Activated B cell treated with CpG ODN at 0.5 μM for 24 hours (primary cell): ENCODE measurements at regions of chr3 and their contacts with region 1.

Region 1: GRCh38 chr3:39361252-39361927 is 21.8 kb upstream of the SLC25A38 start:
- DNase-seq: no peak
- ATAC-seq: no peak
- H3K4me3 Mint-ChIP-seq: no peak overlapping the region
- H3K27ac Mint-ChIP-seq: no peak overlapping the region
- H3K4me1 Mint-ChIP-seq: peaks cover 1% of the 10 kb centered on the region
- H3K27me3 Mint-ChIP-seq: no peaks in the 10 kb centered on the region
- CTCF ChIP-seq: no peak

Region 2: DNA sequence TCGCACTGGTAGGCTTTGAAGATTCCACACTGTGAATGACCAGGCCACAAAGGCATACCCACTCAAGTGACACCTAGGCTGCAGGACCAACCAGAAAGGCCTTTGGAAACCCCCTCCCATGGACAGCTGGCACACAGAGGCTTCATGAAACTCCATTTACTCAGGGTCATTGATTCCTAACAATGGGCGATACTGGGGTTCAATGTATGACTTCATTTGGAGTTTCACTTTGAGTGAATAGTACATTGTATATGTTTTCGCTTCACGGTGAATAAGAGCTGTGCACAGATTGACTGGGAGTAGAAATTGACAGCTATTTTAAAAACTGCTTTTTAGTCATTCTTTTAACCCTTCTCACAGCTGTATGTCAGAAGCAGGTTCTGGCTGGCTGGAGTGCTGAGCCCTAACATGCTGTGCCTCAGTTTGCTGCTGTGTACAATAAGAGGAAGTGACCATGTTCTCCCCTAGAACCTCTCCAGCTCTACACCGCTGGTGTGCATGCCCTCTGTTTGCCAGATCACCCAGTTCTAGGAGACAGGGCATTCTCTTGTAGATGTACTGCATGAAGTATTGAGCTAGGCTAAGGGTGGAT is 66.1 kb before region 1 on chr3:
- CTCF ChIA-PET with region 1: no interaction called
- POLR2A ChIA-PET with region 1: no interaction called
- intact Hi-C with region 1: no loop called
- DNase-seq: no peak
- ATAC-seq: no peak
- H3K4me3 Mint-ChIP-seq: no peak overlapping the region
- H3K27ac Mint-ChIP-seq: no peak overlapping the region
- H3K4me1 Mint-ChIP-seq: peaks cover 4% of the 10 kb centered on the region
- H3K27me3 Mint-ChIP-seq: peaks cover 12% of the 10 kb centered on the region
- CTCF ChIP-seq: no peak

Region 3: DNA sequence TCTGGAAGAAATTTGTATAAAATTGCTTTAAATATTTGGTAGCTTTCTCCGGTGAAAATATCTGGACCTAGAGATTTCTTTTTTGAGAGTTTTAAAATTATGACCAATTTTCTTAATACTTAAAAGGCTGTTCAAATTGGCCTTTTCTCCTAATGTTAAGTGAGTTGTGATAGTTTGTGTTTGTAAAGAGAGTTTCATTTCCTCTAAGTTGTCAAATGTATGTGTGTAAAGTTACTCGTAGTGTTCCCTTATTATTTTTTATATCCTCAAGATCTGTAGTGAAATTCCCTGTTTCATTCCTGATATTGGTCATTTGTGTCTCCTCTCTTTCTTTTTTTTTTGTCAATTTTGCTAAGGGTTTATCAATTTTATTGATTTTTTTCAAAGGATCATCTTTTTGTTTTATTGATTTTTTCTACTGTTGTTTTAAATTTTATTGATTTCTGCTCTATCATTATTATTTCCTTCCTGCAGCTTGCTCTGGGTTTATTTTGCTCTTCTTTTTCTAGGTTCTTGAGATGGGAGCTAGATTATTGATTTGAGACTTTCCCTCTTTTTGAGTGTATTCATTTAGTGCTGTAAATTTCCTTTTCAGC is 1745.4 kb after region 1 on chr3:
- CTCF ChIA-PET with region 1: no interaction called
- POLR2A ChIA-PET with region 1: interaction called, 12 read pairs
- intact Hi-C with region 1: no loop called
- DNase-seq: no peak
- ATAC-seq: no peak
- H3K4me3 Mint-ChIP-seq: no peak overlapping the region
- H3K27ac Mint-ChIP-seq: no peak overlapping the region
- H3K4me1 Mint-ChIP-seq: peaks cover 11% of the 10 kb centered on the region
- H3K27me3 Mint-ChIP-seq: peaks cover 4% of the 10 kb centered on the region
- CTCF ChIP-seq: no peak

Region 4: GRCh38 chr3:41234823-41235721 is 1873.7 kb after region 1 on chr3:
- CTCF ChIA-PET with region 1: no interaction called
- POLR2A ChIA-PET with region 1: no interaction called
- intact Hi-C with region 1: no loop called
- DNase-seq: no peak
- ATAC-seq: no peak
- H3K4me3 Mint-ChIP-seq: no peak overlapping the region
- H3K27ac Mint-ChIP-seq: no peak overlapping the region
- H3K4me1 Mint-ChIP-seq: peaks cover 3% of the 10 kb centered on the region
- H3K27me3 Mint-ChIP-seq: no peaks in the 10 kb centered on the region
- CTCF ChIP-seq: no peak